Thyroid gland (tissue), 4 donors: ENCODE measurements at regions of chr4 and their contacts with region 1.

Region 1: GRCh38 chr4:52983563-52984303 is 121.6 kb downstream of the RASL11B start:
- DNase-seq: no peak
- H3K4me3 ChIP-seq: no peak overlapping the region
- H3K27ac ChIP-seq: no peak overlapping the region
- H3K4me1 ChIP-seq: no peaks in the 10 kb centered on the region
- H3K27me3 ChIP-seq: no peaks in the 10 kb centered on the region
- CTCF ChIP-seq: peak; percentile 45 to 70 (median 58)
- POLR2A ChIP-seq: no peak

Region 2: DNA sequence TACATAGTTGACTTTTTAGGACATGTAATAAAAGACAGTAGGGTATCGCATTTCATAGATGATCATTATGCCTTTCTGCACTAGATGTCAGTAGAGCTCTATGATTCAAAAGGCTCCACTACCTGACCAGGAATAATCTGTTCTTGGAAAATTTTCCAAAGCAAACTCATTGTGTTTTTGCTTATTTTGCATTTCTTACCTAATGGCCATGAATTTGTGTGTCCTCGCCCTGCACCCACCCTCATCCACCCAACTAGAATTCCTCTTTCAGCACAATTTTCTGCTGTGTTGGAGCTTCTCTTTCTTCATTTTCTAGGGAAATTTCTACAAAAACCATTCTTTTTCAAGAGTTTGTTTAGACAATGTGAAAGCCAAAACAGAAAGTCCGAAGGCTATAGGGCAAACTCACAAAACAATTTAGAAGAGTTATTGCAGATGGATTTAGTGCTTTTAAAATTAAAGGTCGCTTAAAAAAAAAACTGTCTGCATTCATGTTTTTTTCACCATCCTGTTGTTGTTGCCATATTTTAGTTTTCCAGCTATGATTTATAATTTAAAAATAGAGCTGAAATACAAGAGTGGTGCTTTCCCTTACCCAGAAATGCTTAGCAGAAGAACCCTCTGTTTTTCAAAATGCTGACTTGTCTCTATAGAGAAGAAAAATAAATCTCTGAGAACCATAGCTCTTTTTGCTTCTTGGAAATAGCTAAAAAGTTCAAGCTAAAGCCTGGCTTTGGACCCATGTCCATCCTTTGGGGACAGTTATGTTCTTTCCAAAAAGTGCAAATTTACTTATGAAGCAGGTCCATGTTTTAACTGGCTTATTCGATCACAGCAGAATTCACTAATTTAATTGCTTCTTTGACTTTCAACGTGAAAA is 748.9 kb before region 1 on chr4:
- intact Hi-C with region 1: loop called (anchors 5 kb)
- DNase-seq: peak; percentile 19 to 31
- H3K4me3 ChIP-seq: no peak overlapping the region
- H3K27ac ChIP-seq: no peak overlapping the region
- H3K4me1 ChIP-seq: peaks cover 5% of the 10 kb centered on the region in 2 donors
- H3K27me3 ChIP-seq: no peaks in the 10 kb centered on the region
- CTCF ChIP-seq: peak; percentile 10 to 87 (median 48)
- POLR2A ChIP-seq: no peak

Region 3: GRCh38 chr4:52376132-52376704 is 607.5 kb before region 1 on chr4:
- intact Hi-C with region 1: loop called (anchors 5 kb)
- DNase-seq: peak; percentile 4 to 13
- H3K4me3 ChIP-seq: no peak overlapping the region
- H3K27ac ChIP-seq: no peak overlapping the region
- H3K4me1 ChIP-seq: no peaks in the 10 kb centered on the region
- H3K27me3 ChIP-seq: no peaks in the 10 kb centered on the region
- CTCF ChIP-seq: peak in 5 of 6 experiments; percentile 29 to 65 (median 49)
- POLR2A ChIP-seq: no peak

Region 4: GRCh38 chr4:52545099-52546069 is 438.3 kb before region 1 on chr4:
- intact Hi-C with region 1: loop called (anchors 5 kb)
- DNase-seq: peak; percentile 69 to 74
- H3K4me3 ChIP-seq: no peak overlapping the region
- H3K27ac ChIP-seq: no peak overlapping the region
- H3K4me1 ChIP-seq: no peaks in the 10 kb centered on the region
- H3K27me3 ChIP-seq: no peaks in the 10 kb centered on the region
- CTCF ChIP-seq: peak; percentile 67 to 93 (median 88)
- POLR2A ChIP-seq: no peak

Region 5: GRCh38 chr4:52676536-52676935 is 307.2 kb before region 1 on chr4:
- intact Hi-C with region 1: no loop called
- DNase-seq: no peak
- H3K4me3 ChIP-seq: no peak overlapping the region
- H3K27ac ChIP-seq: no peak overlapping the region
- H3K4me1 ChIP-seq: no peaks in the 10 kb centered on the region
- H3K27me3 ChIP-seq: no peaks in the 10 kb centered on the region
- CTCF ChIP-seq: no peak
- POLR2A ChIP-seq: no peak

Region 6: DNA sequence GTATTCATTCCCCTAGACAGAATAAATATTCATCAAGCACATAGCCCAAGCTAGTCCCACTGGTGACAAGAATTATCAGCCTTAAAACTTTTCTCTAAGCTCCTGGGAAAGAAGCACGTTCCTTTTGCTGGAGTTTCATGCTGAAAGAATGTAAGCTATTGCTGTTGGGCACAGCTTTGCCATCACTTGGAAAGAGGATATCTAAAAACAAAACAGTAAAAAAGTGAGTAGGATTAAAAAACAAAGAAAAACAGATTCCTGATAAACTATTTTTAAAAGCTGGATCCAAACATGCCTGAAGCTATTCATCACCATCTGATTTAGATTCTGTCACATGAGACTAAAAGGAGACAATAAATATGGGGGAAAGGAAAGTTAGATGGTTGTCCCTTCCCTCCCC is 205.3 kb after region 1 on chr4:
- intact Hi-C with region 1: no loop called
- DNase-seq: no peak
- H3K4me3 ChIP-seq: no peak overlapping the region
- H3K27ac ChIP-seq: no peak overlapping the region
- H3K4me1 ChIP-seq: peaks cover 11 to 14% of the 10 kb centered on the region in 2 donors
- H3K27me3 ChIP-seq: no peaks in the 10 kb centered on the region
- CTCF ChIP-seq: no peak
- POLR2A ChIP-seq: no peak